ENCODE measurements at regions of chr12 and their contacts with region 1.

Region 1: DNA sequence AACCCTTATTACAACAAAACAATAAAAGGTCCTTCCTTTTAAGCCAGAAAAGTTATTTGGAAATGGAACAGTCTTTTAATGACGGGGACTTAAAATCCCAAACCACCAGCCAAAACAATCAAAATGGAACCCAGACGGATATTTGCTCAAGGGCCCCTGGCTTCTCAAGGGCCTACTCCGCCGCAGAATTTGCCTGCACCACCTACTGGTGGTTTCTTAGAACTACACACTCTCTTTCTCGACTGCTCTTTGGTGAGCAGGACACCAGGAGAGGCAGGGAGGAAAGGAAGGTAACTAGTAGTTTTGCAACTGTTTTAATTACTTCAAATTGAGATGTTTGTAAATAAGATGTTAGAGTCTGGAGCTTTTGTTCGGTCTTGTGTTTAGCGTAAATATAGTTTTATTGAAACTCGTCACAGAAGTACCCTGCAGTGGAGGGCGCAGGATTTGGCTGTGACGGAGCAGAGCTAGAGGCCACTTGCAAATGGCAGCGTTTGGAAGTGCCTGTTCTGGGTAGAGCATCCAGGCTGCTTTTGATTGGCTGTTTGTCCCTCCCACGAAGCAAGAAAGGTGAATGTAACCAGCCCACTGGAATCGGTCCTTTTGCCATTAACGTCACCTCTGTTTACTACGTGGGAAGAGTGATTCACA is 238.5 kb downstream of the CACNA1C start:
- H3K4me3 ChIP-seq: no peak overlapping the region
- H3K27ac ChIP-seq: no peak overlapping the region
- H3K4me1 ChIP-seq: no peaks in the 10 kb centered on the region
- CTCF ChIP-seq: 0 out of 2 replicates have a peak, but pooled peaks have one; percentile 19

Region 2: GRCh38 chr12:2306012-2306411 is 14.7 kb after region 1 on chr12:
- CTCF ChIA-PET with region 1: interaction called, 11 read pairs
- POLR2A ChIA-PET with region 1: interaction called, 3 read pairs
- H3K4me3 ChIP-seq: no peak overlapping the region
- H3K27ac ChIP-seq: no peak overlapping the region
- H3K4me1 ChIP-seq: peaks cover 5% of the 10 kb centered on the region; the same call in 1 of the 2 replicates
- CTCF ChIP-seq: no peak

Measured in HEK293 (cell line).